K562 (cell line): ENCODE measurements at regions of chr18 and their contacts with region 1.

Region 1: GRCh38 chr18:21612125-21612991 is at the start of gene SNRPD1:
- DNase-seq: peak; percentile 84 to 95 (median 90)
- ATAC-seq: peak; percentile 98
- H3K4me3 ChIP-seq: peak within 1 kb of the TSS; percentile 67
- H3K27ac ChIP-seq: peak within 1 kb of the TSS; percentile 94
- H3K4me1 ChIP-seq: peaks cover 7 to 10% of the 10 kb centered on the region in 2 experiments; a peak in 3 of 5 replicates
- H3K27me3 ChIP-seq: no peaks in the 10 kb centered on the region
- CTCF ChIP-seq: peak; percentile 91 to 95 (median 94)
- EP300 ChIP-seq: peak; percentile 55
- POLR2A ChIP-seq: peak; percentile 98
- RAD21 ChIP-seq: peak; percentile 22 to 23; a peak in 3 of 4 replicates
- polyA plus RNA-seq, gene SNRPD1: 960 to 1,063 TPM

Region 2: DNA sequence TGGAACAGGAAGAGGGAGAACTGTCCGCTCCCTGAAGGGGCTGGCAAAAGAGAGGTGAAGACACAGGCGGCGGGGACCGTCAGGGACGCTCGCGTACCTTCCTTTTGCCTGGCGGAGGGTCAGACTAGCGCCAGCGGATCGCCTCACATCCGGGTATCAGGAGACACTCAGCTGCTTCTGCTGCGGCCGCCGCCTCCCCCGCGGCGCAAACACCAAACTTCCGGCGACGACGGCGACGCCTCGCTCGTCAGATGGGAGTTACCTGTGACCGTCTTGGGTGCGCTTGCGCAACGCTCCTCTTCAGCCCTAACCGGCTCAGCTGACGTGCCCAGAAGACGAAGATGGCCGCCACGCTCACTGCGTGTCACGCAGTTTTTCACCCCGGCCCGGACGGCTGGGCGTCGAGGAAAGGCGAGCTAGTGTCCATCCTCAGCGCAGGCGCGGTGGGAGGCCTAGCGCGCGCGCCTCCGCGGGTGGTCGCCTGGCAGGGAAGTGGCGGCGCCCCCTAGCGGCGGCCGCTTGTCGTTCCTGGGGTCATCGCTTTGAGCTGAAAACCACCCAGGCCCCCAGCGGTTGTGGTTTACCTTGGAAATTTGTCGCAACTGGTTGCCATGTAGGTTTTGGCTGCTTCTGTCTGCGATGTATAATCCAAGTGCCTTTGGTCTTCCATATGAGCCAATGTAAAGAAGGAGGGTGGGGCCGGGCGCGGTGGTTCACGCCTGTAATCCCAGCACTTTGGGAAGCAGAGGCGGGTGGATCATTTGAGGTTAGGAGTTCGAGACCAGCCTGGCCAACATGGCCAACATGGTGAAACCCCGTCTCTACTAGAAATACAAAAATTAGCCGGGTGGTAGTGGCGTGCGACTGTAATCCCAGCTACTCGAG is 11.6 kb before region 1 on chr18 and contains the start of gene ESCO1:
- CTCF ChIA-PET with region 1: interaction called, 3 read pairs
- POLR2A ChIA-PET with region 1: interaction called, 31 read pairs
- in situ Hi-C with region 1: no loop called
- intact Hi-C with region 1: no loop called
- DNase-seq: peak; percentile 89 to 99 (median 92)
- ATAC-seq: peak; percentile 87
- H3K4me3 ChIP-seq: peak within 1 kb of the TSS; percentile 97
- H3K27ac ChIP-seq: peak within 1 kb of the TSS; percentile 100
- H3K4me1 ChIP-seq: peaks cover 15 to 16% of the 10 kb centered on the region in 2 experiments
- H3K27me3 ChIP-seq: no peaks in the 10 kb centered on the region
- CTCF ChIP-seq: peak; percentile 97 to 98 (median 98)
- EP300 ChIP-seq: no peak; the same call in 1 of the 2 replicates
- POLR2A ChIP-seq: peak; percentile 96
- RAD21 ChIP-seq: peak in 1 of 2 experiments; percentile 63; a peak in 3 of 4 replicates
- polyA plus RNA-seq, gene ESCO1: 15.6 to 22.6 TPM

Region 3: GRCh38 chr18:21704603-21705364 is 92.4 kb after region 1 on chr18 and contains the start of gene ABHD3:
- CTCF ChIA-PET with region 1: no interaction called
- POLR2A ChIA-PET with region 1: interaction called, 3 read pairs
- in situ Hi-C with region 1: no loop called
- intact Hi-C with region 1: loop called (anchors 5 kb)
- DNase-seq: peak; percentile 87 to 95 (median 90)
- ATAC-seq: peak; percentile 99
- H3K4me3 ChIP-seq: peak within 1 kb of the TSS; percentile 98
- H3K27ac ChIP-seq: peak within 1 kb of the TSS; percentile 89
- H3K4me1 ChIP-seq: peaks cover 6 to 21% of the 10 kb centered on the region in 2 experiments
- H3K27me3 ChIP-seq: no peaks in the 10 kb centered on the region
- CTCF ChIP-seq: peak; percentile 30 to 58 (median 47)
- EP300 ChIP-seq: peak; percentile 34; the same call in 1 of the 2 replicates
- POLR2A ChIP-seq: peak; percentile 83
- RAD21 ChIP-seq: no peak; a peak in 1 of 4 replicates
- polyA plus RNA-seq, gene ABHD3: 6.3 to 8.1 TPM

Region 4: DNA sequence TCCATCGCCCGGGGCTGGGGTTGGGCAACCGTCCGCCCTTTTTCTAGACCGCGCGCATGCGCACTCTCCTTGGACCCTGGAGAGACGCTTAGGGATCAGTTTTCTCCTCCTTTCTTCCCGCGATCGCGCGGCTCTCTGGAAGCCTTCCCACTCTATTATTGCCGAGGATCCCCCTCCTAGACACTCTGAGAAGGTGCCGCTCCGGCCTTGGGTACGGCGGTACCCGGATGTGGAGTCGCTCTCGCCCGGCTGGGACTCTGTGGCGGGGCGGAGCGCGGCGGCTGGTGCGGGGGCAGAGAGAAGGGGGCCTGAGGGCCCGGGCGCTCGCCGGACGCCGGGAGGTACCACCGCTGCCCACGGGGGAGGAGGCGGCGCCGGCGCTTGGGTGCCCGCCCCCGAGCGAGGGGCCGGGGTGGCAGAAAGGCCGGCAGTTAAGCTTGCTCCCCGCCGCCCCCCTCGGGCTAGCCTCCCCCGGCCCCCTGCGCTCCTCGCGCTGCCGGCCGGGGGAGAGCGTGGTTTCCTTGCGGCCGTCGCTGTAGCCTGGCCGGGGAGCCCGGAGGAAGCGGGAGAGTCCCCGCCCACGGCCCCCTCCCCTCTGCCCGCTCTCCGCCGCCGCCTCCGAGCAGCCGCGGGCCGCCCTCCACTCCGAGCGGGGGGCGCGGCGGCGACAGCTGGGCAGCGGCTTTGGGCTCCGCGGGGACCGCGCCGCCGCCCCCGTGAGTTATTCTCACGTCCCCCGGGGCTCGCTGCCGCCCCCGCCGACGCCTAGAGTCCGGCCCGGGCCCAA is 128.6 kb after region 1 on chr18 and contains the start of gene MIB1:
- CTCF ChIA-PET with region 1: no interaction called
- POLR2A ChIA-PET with region 1: interaction called, 4 read pairs
- in situ Hi-C with region 1: no loop called
- intact Hi-C with region 1: loop called (anchors 5 kb)
- DNase-seq: peak; percentile 63 to 74 (median 68)
- ATAC-seq: peak; percentile 72
- H3K4me3 ChIP-seq: peak within 1 kb of the TSS; percentile 90
- H3K27ac ChIP-seq: peak within 1 kb of the TSS; percentile 95
- H3K4me1 ChIP-seq: peaks cover 12 to 17% of the 10 kb centered on the region in 2 experiments; a peak in 4 of 5 replicates
- H3K27me3 ChIP-seq: no peaks in the 10 kb centered on the region
- CTCF ChIP-seq: no peak
- EP300 ChIP-seq: no peak
- POLR2A ChIP-seq: peak; percentile 87
- RAD21 ChIP-seq: no peak
- polyA plus RNA-seq, gene MIB1: 7.2 to 7.6 TPM

Region 5: DNA sequence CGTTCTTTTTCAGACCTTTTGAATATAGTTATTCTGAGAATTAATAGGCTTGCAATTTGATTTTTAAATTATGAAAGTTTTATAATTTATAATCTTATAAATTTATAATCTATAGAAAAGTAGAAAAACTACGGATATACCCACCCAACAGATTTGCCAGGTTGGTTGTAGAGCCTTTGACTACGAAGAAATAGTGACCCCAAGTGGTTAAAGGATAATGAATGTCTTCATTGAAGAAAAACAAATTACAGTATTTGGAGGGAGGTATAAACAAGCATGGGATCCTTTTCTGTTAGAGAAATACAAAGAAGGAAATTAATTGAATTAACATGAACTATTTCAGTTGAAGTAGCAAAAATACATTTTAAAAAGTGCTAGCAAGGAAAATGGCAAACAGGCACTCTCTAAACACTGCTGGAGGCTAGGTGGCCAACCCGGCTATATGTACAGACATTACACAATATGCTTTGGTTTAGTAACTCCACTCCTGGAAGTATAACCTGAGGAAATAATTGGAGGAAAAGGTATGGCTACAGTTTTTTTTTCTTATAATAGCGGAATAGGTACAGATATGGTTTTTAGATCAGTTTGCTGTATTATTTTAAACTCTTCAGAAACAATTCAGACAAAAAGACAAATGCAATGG is 239.1 kb after region 1 on chr18:
- CTCF ChIA-PET with region 1: no interaction called
- POLR2A ChIA-PET with region 1: no interaction called
- in situ Hi-C with region 1: no loop called
- intact Hi-C with region 1: loop called (anchors 10 kb)
- DNase-seq: peak in 1 of 4 experiments; percentile 19
- ATAC-seq: peak; percentile 69; the same call in 1 of the 3 replicates
- H3K4me3 ChIP-seq: no peak overlapping the region
- H3K27ac ChIP-seq: no peak overlapping the region
- H3K4me1 ChIP-seq: no peaks in the 10 kb centered on the region
- H3K27me3 ChIP-seq: no peaks in the 10 kb centered on the region
- CTCF ChIP-seq: peak; percentile 14 to 50 (median 17); a peak in 3 of 6 replicates
- EP300 ChIP-seq: no peak
- POLR2A ChIP-seq: no peak
- RAD21 ChIP-seq: peak; percentile 15 to 56; a peak in 3 of 4 replicates